GM12878 (cell line): ENCODE measurements at regions of chr6 and their contacts with region 1.

Region 1: DNA sequence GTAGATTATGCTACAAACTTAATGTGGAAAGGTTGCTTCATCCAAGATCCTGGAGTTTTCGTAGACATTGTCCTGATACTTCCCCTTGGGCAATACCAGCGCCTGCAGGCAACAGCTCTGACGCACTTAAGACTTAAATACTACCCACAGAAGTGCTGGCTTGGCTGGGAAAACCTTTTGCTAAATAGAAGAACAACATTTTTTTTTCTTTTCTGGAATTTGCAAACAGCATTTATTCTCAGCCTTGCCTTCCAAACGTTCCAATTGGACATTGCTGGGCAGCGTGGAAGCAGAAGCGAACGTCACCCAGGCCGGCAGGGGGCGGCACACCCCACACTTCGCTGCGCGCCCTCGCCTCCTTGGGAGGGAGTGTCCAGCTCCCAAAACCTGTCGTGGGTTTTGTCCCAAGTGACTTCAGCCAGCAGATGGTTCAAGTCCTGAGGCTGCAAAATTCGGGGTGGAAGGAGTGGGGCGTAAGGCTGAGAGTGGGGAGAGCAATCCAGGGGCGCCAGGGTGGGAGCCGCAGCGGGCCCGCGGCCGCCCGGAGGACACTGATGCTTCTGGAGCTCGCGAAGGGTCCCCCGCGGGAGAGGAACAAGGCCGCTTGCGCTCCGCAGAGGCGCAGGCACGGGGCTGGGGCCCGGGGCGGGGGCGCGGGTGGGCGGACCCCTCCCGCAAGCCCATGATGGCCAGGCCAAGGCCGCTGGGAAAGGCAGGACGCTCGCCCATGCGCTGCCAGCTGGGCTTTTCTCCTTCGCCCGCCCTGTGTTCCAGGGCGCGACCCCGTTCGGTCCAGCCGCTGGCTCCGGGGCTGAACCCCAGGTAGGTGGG is 60.8 kb upstream of the MAP3K4 start:
- DNase-seq: no peak
- ATAC-seq: peak; percentile 96
- H3K4me3 ChIP-seq: peak overlapping the region; percentile 31; the same call in 1 of the 2 replicates
- H3K27ac ChIP-seq: no peak overlapping the region
- H3K4me1 ChIP-seq: no peaks in the 10 kb centered on the region
- H3K27me3 ChIP-seq: no peaks in the 10 kb centered on the region
- CTCF ChIP-seq: peak; percentile 80 to 88 (median 87)
- EP300 ChIP-seq: no peak
- POLR2A ChIP-seq: no peak
- RAD21 ChIP-seq: peak; percentile 88

Region 2: DNA sequence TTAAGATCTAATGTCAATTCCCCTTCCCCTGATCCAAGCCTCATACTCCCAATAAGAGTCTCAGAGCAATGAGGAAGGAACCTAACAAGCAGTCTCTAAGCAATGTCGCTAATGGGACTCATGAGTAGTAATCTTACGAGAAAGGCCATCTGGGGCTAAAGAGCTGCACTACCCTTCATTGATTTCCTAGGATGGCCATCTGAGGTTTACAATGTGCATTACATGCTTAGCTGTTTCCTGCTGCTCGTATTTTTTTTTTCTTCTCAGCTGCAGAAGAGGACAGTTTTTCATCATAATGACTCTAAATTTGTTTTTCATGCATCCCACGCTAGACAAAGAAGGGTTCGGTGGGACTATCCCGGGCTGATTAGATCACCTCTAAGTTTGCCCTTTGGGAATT is 386.0 kb before region 1 on chr6:
- CTCF ChIA-PET with region 1: no interaction called
- POLR2A ChIA-PET with region 1: no interaction called
- RAD21 ChIA-PET with region 1: no interaction called
- SMC1A ChIA-PET with region 1: no interaction called
- in situ Hi-C with region 1: no loop called
- intact Hi-C with region 1: no loop called
- DNase-seq: no peak
- ATAC-seq: no peak
- H3K4me3 ChIP-seq: no peak overlapping the region
- H3K27ac ChIP-seq: no peak overlapping the region
- H3K4me1 ChIP-seq: no peaks in the 10 kb centered on the region
- H3K27me3 ChIP-seq: no peaks in the 10 kb centered on the region
- CTCF ChIP-seq: no peak
- EP300 ChIP-seq: no peak
- POLR2A ChIP-seq: no peak
- RAD21 ChIP-seq: no peak

Region 3: GRCh38 chr6:160733050-160733646 is 197.6 kb before region 1 on chr6:
- CTCF ChIA-PET with region 1: interaction called, 4 read pairs
- POLR2A ChIA-PET with region 1: no interaction called
- RAD21 ChIA-PET with region 1: interaction called, 3 read pairs
- SMC1A ChIA-PET with region 1: no interaction called
- in situ Hi-C with region 1: no loop called
- intact Hi-C with region 1: loop called (anchors 5 kb)
- DNase-seq: no peak
- ATAC-seq: peak; percentile 89
- H3K4me3 ChIP-seq: no peak overlapping the region
- H3K27ac ChIP-seq: no peak overlapping the region
- H3K4me1 ChIP-seq: peaks cover 26% of the 10 kb centered on the region
- H3K27me3 ChIP-seq: no peaks in the 10 kb centered on the region
- CTCF ChIP-seq: peak; percentile 69 to 87 (median 72)
- EP300 ChIP-seq: no peak
- POLR2A ChIP-seq: no peak
- RAD21 ChIP-seq: peak; percentile 91

Region 4: DNA sequence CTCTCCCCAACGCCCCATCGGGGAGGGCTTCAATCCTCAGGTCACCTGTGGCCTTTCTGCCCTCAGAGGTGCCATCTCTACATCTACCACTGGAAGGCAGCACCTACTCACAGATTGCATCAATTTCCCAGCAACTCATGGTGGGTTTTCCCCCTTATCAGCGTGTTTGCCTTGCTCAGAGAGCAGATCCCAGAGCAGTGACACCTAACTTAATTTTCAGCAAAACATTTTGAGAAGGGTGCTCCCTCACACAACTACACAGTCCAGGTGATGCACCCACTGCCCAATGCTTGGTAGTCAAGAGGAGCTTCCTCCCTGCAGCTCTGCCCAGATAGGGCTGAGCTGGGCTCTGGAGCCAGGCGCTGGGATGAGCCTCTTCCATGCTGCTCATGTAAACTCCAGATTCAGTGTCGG is 180.5 kb before region 1 on chr6:
- CTCF ChIA-PET with region 1: no interaction called
- POLR2A ChIA-PET with region 1: no interaction called
- RAD21 ChIA-PET with region 1: no interaction called
- SMC1A ChIA-PET with region 1: interaction called, 3 read pairs
- in situ Hi-C with region 1: no loop called
- intact Hi-C with region 1: loop called (anchors 5 kb)
- DNase-seq: peak; percentile 39
- ATAC-seq: peak; percentile 80
- H3K4me3 ChIP-seq: no peak overlapping the region
- H3K27ac ChIP-seq: no peak overlapping the region
- H3K4me1 ChIP-seq: no peaks in the 10 kb centered on the region
- H3K27me3 ChIP-seq: no peaks in the 10 kb centered on the region
- CTCF ChIP-seq: peak; percentile 78 to 95 (median 84); a peak in 5 of 6 replicates
- EP300 ChIP-seq: no peak
- POLR2A ChIP-seq: no peak
- RAD21 ChIP-seq: peak; percentile 95

Region 5: DNA sequence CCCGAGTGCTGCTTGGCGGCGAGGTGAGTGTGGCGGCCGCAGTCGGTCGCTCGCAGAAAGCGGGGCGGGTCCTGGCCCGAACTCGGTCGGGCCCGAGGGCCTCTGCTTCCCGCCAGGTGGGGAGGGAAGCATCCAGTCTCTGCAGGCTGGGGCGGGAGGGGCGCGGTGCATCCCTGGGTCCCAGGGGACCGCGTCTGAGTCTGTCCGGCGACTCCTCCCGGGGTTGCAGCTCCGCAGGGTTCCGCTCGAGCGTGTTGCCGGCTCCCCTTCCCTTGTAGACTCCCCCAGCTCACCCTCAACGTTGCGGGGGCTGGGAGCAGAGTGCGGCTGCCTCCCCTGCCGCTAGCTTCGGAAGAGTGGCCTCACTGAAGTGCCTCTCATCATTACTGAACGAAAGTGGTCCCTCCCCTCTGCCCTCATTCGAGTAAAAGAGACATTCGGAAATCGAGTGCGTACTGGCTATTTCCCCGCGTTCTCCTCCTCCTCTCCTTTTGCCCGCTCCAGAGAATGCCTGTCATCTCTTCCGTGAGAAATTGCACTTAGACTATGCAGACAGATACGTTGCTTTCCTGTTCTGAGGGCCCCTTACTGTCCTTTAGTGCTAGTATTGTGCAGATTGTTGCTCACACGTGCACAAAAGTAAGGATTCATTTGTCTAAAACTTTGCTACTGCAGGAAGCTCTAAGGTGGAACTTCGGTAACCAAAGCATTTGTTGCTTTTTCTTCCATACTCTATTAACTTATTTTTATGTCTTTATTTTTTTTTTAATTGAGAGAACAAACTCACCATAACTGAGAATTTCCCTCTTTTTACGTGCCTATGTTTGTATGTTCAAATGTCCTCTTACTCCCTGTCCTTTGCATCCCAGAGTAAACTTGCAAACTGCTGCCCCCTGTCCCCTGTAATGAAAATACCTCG is 61.6 kb after region 1 on chr6:
- CTCF ChIA-PET with region 1: interaction called, 14 read pairs
- POLR2A ChIA-PET with region 1: no interaction called
- RAD21 ChIA-PET with region 1: interaction called, 5 read pairs
- SMC1A ChIA-PET with region 1: interaction called, 6 read pairs
- in situ Hi-C with region 1: no loop called
- intact Hi-C with region 1: loop called (anchors 5 kb)
- DNase-seq: no peak
- ATAC-seq: peak; percentile 68
- H3K4me3 ChIP-seq: peak overlapping the region; percentile 95
- H3K27ac ChIP-seq: peak overlapping the region; percentile 69
- H3K4me1 ChIP-seq: no peaks in the 10 kb centered on the region; the same call in 1 of the 2 replicates
- H3K27me3 ChIP-seq: no peaks in the 10 kb centered on the region
- CTCF ChIP-seq: peak; percentile 55 to 64 (median 55)
- EP300 ChIP-seq: no peak
- POLR2A ChIP-seq: peak; percentile 26
- RAD21 ChIP-seq: peak; percentile 62

Region 6: GRCh38 chr6:161101517-161101916 is 170.8 kb after region 1 on chr6:
- CTCF ChIA-PET with region 1: no interaction called
- POLR2A ChIA-PET with region 1: no interaction called
- RAD21 ChIA-PET with region 1: interaction called, 3 read pairs
- SMC1A ChIA-PET with region 1: interaction called, 3 read pairs
- in situ Hi-C with region 1: no loop called
- intact Hi-C with region 1: loop called (anchors 5 kb)
- DNase-seq: no peak
- ATAC-seq: no peak
- H3K4me3 ChIP-seq: no peak overlapping the region
- H3K27ac ChIP-seq: no peak overlapping the region
- H3K4me1 ChIP-seq: no peaks in the 10 kb centered on the region
- H3K27me3 ChIP-seq: no peaks in the 10 kb centered on the region
- CTCF ChIP-seq: peak in 2 of 3 experiments; percentile 14; a peak in 1 of 6 replicates
- EP300 ChIP-seq: no peak
- POLR2A ChIP-seq: no peak
- RAD21 ChIP-seq: peak; percentile 30; the same call in 1 of the 2 replicates

Region 7: GRCh38 chr6:161218222-161218621 is 287.5 kb after region 1 on chr6:
- CTCF ChIA-PET with region 1: interaction called, 14 read pairs
- POLR2A ChIA-PET with region 1: no interaction called
- RAD21 ChIA-PET with region 1: interaction called, 3 read pairs
- SMC1A ChIA-PET with region 1: interaction called, 3 read pairs
- in situ Hi-C with region 1: no loop called
- intact Hi-C with region 1: loop called (anchors 2 kb)
- DNase-seq: no peak
- ATAC-seq: no peak
- H3K4me3 ChIP-seq: no peak overlapping the region
- H3K27ac ChIP-seq: no peak overlapping the region
- H3K4me1 ChIP-seq: no peaks in the 10 kb centered on the region
- H3K27me3 ChIP-seq: no peaks in the 10 kb centered on the region
- CTCF ChIP-seq: peak in 2 of 3 experiments; percentile 8 to 19; a peak in 1 of 6 replicates
- EP300 ChIP-seq: no peak
- POLR2A ChIP-seq: no peak
- RAD21 ChIP-seq: peak; percentile 30; the same call in 1 of the 2 replicates

Region 8: DNA sequence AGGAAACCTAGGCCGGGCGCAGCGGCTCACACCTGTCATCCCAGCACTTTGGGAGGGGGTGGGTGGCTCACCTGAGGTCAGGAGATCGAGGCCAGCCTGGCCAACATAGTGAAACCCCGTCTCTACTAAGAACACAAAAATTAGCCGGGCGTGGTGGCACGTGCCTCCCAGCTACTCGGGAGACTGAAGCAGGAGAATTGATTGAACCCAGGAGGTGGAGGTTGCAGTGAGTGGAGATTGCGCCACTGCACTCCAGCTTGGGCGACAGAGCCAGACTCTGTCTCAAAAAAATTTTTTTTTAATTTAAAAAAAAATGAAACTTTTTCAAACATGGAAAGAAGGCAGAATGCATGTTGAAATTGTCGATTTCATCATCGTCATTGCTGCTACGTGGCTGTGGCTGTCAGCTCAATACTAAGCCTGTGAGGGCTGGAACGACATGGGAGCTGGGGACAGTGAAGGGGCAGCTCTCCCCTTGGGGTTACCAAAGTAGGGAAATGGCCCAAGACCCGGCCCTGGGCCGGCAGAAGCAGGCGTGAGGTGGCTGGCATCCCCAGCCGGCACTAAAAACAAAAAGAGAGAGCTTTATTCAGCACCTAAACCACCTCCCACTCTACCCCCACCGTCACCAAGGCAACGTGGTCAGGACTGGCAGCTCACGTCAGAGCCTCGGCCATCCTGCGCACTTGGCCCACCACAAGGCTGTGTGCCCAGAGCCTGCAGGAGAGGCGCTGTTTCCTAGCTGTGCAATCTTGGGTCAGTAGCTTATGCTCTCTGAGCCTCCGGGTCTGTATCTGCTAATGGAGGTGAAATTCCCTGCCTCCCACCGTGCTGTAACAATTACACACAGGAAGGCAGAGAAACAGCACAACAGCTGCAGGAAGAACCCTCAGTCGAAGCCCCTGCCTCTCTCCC is 312.3 kb after region 1 on chr6:
- CTCF ChIA-PET with region 1: no interaction called
- POLR2A ChIA-PET with region 1: no interaction called
- RAD21 ChIA-PET with region 1: no interaction called
- SMC1A ChIA-PET with region 1: no interaction called
- in situ Hi-C with region 1: no loop called
- intact Hi-C with region 1: no loop called
- DNase-seq: no peak
- ATAC-seq: no peak
- H3K4me3 ChIP-seq: no peak overlapping the region
- H3K27ac ChIP-seq: no peak overlapping the region
- H3K4me1 ChIP-seq: no peaks in the 10 kb centered on the region
- H3K27me3 ChIP-seq: no peaks in the 10 kb centered on the region
- CTCF ChIP-seq: no peak
- EP300 ChIP-seq: no peak
- POLR2A ChIP-seq: no peak
- RAD21 ChIP-seq: no peak

Region 9: GRCh38 chr6:161406646-161407045 is 475.9 kb after region 1 on chr6:
- CTCF ChIA-PET with region 1: no interaction called
- POLR2A ChIA-PET with region 1: no interaction called
- RAD21 ChIA-PET with region 1: no interaction called
- SMC1A ChIA-PET with region 1: no interaction called
- in situ Hi-C with region 1: no loop called
- intact Hi-C with region 1: no loop called
- DNase-seq: no peak
- ATAC-seq: no peak
- H3K4me3 ChIP-seq: no peak overlapping the region
- H3K27ac ChIP-seq: no peak overlapping the region
- H3K4me1 ChIP-seq: no peaks in the 10 kb centered on the region
- H3K27me3 ChIP-seq: no peaks in the 10 kb centered on the region
- CTCF ChIP-seq: no peak
- EP300 ChIP-seq: no peak
- POLR2A ChIP-seq: no peak
- RAD21 ChIP-seq: no peak